ENCODE measurements at regions of chr12 and their contacts with region 1.

Region 1: DNA sequence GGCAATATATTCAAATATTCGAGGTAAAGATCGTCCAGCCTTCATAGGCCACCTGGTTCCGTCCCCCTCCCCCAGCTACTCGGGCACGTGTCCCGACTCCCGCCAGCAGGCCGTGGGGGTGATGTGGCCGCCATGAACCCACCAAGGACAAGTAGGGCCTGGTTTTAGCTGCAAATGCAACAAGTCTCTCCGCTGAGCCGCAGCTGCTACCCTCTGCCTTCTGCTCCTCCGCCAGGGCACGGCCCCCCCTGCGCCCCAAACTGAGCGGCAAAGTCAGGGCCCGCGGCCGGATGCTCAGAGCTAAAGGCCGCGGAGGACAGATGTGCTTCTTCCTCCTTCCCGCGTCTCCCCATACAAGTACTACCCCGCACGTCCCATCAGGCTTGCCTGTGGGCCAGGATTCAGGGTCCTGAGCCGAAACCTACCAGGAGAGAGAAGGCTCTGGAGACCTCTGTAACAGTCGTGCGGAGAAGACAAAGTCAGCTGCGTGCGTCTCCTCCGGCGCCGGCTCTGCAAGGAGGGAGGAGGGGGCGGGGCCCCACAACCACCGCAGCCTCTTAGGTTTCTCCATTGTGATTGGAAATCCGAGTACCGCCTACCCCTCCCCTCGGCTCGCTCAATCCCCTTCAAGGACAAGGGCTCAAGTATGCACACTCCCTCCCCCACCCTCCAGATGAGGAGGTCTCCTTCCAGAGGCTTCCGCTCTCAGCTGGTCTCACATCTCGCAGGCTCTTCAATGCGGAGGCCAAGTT is at the start of gene LDHB:
- DNase-seq: peak; percentile 95 to 97
- H3K4me3 ChIP-seq: peak within 1 kb of the TSS; percentile 80
- H3K4me1 ChIP-seq: peaks cover 21% of the 10 kb centered on the region
- H3K27me3 ChIP-seq: peaks cover 8% of the 10 kb centered on the region; the same call in 1 of the 2 replicates

Region 2: DNA sequence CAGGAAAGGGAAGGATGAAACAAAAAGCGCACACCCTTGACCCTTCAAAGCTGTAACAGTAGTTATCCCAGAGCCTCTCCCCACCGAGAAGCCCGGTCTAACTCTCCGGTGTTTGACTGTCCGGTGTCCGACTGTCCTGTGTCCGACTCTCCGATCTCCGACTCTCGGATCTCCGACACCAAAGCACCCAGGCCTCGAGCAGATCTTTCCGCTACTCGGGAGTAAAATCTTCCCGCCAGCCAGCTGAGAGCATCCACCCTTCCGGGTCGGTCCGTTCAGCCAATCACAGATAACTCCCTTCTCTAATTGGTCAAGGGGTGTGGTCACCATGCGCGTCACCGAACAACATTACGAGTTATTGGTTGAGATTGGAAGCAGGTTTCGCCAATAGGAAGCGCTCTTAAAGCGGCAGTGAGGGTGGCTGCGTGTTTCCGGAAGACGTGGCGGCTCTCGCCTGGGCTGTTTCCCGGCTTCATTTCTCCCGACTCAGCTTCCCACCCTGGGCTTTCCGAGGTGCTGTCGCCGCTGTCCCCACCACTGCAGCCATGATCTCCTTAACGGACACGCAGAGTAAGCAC is 156.0 kb before region 1 on chr12 and contains the starts of genes GOLT1B and RECQL:
- in situ Hi-C with region 1: loop called (anchors 10 kb)
- DNase-seq: peak; percentile 92 to 96
- H3K4me3 ChIP-seq: peak within 1 kb of the TSS; percentile 90
- H3K4me1 ChIP-seq: peaks cover 17% of the 10 kb centered on the region
- H3K27me3 ChIP-seq: no peaks in the 10 kb centered on the region